T-cell (primary cell): ENCODE measurements at regions of chr11 and their contacts with region 1.

Region 1: GRCh38 chr11:119084663-119085436 is at the start of gene HMBS:
- DNase-seq: peak; percentile 79 to 96 (median 89)
- ATAC-seq: peak; percentile 93 to 95 (median 94)
- H3K4me3 ChIP-seq: peak within 1 kb of the TSS; percentile 70 to 96
- H3K4me3 Mint-ChIP-seq: peak within 1 kb of the TSS; percentile 89 to 93 (median 91)
- H3K27ac ChIP-seq: peak within 1 kb of the TSS; percentile 57
- H3K27ac Mint-ChIP-seq: peak within 1 kb of the TSS; percentile 92 to 97
- H3K4me1 ChIP-seq: peaks cover 3 to 30% of the 10 kb centered on the region in 2 experiments
- H3K4me1 Mint-ChIP-seq: peaks cover 15 to 22% (median 18%) of the 10 kb centered on the region in 3 donors
- H3K27me3 ChIP-seq: no peaks in the 10 kb centered on the region
- H3K27me3 Mint-ChIP-seq: no peaks in the 10 kb centered on the region
- total RNA-seq, gene HMBS: 6.7 to 17.8 (median 12.3) TPM

Region 2: DNA sequence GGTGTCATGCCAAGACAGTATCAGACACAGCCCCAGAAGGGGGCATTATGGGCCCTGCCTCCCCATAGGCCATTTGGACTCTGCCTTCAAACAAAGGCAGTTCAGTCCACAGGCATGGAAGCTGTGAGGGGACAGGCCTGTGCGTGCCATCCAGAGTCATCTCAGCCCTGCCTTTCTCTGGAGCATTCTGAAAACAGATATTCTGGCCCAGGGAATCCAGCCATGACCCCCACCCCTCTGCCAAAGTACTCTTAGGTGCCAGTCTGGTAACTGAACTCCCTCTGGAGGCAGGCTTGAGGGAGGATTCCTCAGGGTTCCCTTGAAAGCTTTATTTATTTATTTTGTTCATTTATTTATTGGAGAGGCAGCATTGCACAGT is 1084.0 kb before region 1 on chr11:
- CTCF ChIA-PET with region 1: no interaction called
- POLR2A ChIA-PET with region 1: interaction called in 1 of 2 experiments, 10 read pairs
- DNase-seq: no peak
- ATAC-seq: no peak
- H3K4me3 ChIP-seq: no peak overlapping the region
- H3K4me3 Mint-ChIP-seq: peak overlapping the region in 1 of 3 donors; percentile 66
- H3K27ac ChIP-seq: peak overlapping the region; percentile 88
- H3K27ac Mint-ChIP-seq: peak overlapping the region; percentile 99 to 100
- H3K4me1 ChIP-seq: peaks cover 27 to 95% of the 10 kb centered on the region in 2 experiments
- H3K4me1 Mint-ChIP-seq: peaks cover 87 to 97% (median 97%) of the 10 kb centered on the region in 3 donors
- H3K27me3 ChIP-seq: no peaks in the 10 kb centered on the region
- H3K27me3 Mint-ChIP-seq: no peaks in the 10 kb centered on the region

Region 3: GRCh38 chr11:119047205-119047604 is 37.6 kb before region 1 on chr11:
- CTCF ChIA-PET with region 1: interaction called in 1 of 2 experiments, 9 read pairs
- POLR2A ChIA-PET with region 1: interaction called in 1 of 2 experiments, 10 read pairs
- DNase-seq: no peak
- ATAC-seq: no peak
- H3K4me3 ChIP-seq: no peak overlapping the region
- H3K4me3 Mint-ChIP-seq: no peak overlapping the region
- H3K27ac ChIP-seq: no peak overlapping the region
- H3K27ac Mint-ChIP-seq: no peak overlapping the region
- H3K4me1 ChIP-seq: peaks cover 0 to 9% of the 10 kb centered on the region in 2 experiments
- H3K4me1 Mint-ChIP-seq: peaks cover 0 to 5% (median 1%) of the 10 kb centered on the region in 3 donors
- H3K27me3 ChIP-seq: no peaks in the 10 kb centered on the region
- H3K27me3 Mint-ChIP-seq: no peaks in the 10 kb centered on the region

Region 4: DNA sequence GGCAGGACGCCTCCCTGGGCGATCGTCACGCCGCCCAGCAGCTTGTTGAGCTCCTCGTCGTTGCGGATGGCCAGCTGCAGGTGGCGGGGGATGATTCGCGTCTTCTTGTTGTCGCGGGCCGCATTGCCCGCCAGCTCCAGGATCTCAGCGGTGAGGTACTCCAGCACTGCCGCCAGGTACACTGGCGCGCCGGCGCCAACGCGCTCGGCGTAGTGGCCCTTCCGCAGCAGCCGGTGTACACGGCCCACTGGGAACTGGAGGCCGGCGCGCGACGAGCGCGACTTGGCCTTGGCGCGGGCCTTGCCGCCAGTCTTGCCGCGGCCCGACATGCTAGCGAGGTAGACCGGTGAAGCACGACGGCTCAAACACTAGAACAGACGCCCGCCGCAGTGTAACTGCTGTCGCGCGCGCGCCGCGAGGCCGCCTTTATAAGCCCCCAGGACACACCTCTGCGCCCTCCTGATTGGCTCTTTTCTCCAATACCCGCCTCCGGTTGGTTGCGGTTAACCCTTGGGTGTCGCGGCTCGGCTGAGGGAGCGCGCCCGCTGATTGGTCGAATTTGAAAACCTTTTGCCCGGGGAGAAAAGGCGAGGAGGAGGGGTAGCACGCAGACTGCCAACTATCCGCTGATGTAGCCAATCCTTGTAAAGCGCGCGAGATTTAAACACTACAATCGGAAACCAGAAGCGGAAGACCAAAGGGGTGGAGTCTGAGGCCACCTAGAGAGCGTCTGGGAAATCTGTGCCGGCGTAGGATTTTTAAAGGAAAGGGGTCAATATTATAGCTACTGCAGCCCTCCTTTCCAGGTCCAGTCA is 10.4 kb after region 1 on chr11:
- CTCF ChIA-PET with region 1: interaction called in 1 of 2 experiments, 4 read pairs
- POLR2A ChIA-PET with region 1: interaction called, 3 to 14 read pairs
- DNase-seq: peak; percentile 97 to 100 (median 99)
- ATAC-seq: peak; percentile 85 to 90 (median 88)
- H3K4me3 ChIP-seq: peak overlapping the region; percentile 73 to 95
- H3K4me3 Mint-ChIP-seq: peak overlapping the region; percentile 88 to 98 (median 92)
- H3K27ac ChIP-seq: peak overlapping the region; percentile 46
- H3K27ac Mint-ChIP-seq: peak overlapping the region; percentile 90 to 93
- H3K4me1 ChIP-seq: peaks cover 9 to 32% of the 10 kb centered on the region in 2 experiments
- H3K4me1 Mint-ChIP-seq: peaks cover 38 to 39% (median 38%) of the 10 kb centered on the region in 3 donors
- H3K27me3 ChIP-seq: no peaks in the 10 kb centered on the region
- H3K27me3 Mint-ChIP-seq: no peaks in the 10 kb centered on the region

Region 5: DNA sequence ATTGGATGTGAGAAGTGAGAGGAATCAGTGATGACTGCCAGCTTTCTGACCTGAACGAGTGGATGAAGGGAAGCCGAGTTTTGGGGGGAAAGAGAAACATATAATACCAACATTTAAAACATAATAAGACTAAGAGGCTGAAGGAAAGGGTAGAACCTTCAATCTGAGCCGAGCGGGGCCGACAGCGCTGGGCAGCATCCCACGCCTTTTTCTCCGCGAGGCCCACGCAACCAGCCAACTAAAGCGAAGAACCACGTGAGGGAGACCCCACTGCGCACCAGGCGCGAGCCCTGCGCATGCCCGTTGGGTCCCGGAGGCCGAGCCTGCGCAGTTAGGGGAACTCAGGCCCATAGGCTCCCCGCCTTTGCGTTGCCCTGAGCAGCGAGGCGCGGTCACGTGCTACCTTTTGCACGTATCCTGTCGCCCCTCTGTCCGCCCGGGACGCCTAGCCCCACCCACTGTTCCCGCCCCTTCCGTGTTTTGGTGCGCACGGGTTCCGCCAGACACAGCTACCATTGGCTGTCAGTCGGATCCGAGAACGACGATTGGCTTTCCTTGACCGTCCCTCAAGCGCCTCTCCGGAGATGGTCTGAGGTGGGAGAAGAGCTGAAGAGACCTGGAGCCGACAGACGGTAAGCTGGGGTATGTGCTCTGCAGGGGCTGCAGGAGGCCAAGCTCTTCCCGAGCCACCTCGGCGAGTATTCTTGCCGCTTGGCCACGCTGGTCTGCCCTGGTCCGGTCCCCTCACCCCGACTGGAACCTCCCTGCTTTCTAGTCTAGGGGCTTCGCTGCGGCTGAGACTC is 36.4 kb after region 1 on chr11 and contains the start of gene HINFP:
- CTCF ChIA-PET with region 1: interaction called in 1 of 2 experiments, 5 read pairs
- POLR2A ChIA-PET with region 1: interaction called, 3 to 16 read pairs
- DNase-seq: peak; percentile 97 to 100 (median 100)
- ATAC-seq: peak; percentile 97 to 99 (median 98)
- H3K4me3 ChIP-seq: peak within 1 kb of the TSS; percentile 77 to 91
- H3K4me3 Mint-ChIP-seq: peak within 1 kb of the TSS; percentile 89 to 94 (median 91)
- H3K27ac ChIP-seq: peak within 1 kb of the TSS; percentile 85
- H3K27ac Mint-ChIP-seq: peak within 1 kb of the TSS; percentile 94 to 95
- H3K4me1 ChIP-seq: peaks cover 13 to 30% of the 10 kb centered on the region in 2 experiments
- H3K4me1 Mint-ChIP-seq: peaks cover 38 to 54% (median 50%) of the 10 kb centered on the region in 3 donors
- H3K27me3 ChIP-seq: no peaks in the 10 kb centered on the region
- H3K27me3 Mint-ChIP-seq: no peaks in the 10 kb centered on the region
- total RNA-seq, gene HINFP: 30.0 to 68.5 (median 56.7) TPM

Region 6: DNA sequence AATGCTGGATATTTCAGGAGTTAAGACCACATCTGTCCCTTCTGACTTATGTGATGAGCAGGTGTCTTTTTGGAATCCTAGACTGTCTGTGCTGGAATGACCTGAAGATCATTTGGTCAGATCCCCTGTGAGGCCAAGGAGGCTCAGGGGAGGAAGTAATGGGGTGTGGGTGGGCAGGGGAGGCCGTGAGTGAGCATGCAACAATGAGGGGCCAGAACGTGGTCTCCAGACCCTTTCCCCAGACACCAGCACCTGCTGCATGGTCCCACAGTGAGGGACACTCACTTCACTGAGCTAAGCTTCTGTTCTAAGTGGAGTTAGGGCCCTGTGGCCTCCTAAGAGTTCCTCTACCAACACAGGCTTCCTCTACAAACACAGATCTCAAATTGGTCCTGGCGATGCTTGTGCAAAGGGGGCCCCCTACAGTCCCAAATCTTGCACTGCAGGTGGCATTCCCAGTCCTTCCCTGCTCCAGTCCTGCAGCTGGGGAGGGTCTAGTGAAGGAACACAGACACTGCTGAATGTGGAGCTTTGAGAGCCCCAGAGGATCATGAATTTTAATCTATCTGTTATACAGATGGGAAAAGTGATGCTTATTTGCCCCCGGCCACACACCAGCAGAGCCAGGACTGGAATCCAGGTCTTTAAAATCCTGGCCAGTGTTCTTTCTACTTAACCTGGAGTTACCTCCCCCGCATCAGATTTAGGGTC is 289.2 kb after region 1 on chr11:
- CTCF ChIA-PET with region 1: no interaction called
- POLR2A ChIA-PET with region 1: no interaction called
- DNase-seq: peak in 8 of 35 experiments; percentile 13 to 63 (median 32)
- ATAC-seq: peak in 3 of 4 experiments; percentile 43 to 63 (median 60)
- H3K4me3 ChIP-seq: no peak overlapping the region
- H3K4me3 Mint-ChIP-seq: no peak overlapping the region
- H3K27ac ChIP-seq: no peak overlapping the region
- H3K27ac Mint-ChIP-seq: no peak overlapping the region
- H3K4me1 ChIP-seq: peaks cover 0 to 23% of the 10 kb centered on the region in 2 experiments
- H3K4me1 Mint-ChIP-seq: peaks cover 6 to 14% (median 12%) of the 10 kb centered on the region in 3 donors
- H3K27me3 ChIP-seq: peaks cover 0 to 40% of the 10 kb centered on the region in 2 experiments
- H3K27me3 Mint-ChIP-seq: peaks cover 9 to 16% of the 10 kb centered on the region in 2 donors